ENCODE measurements at regions of chr9 and their contacts with region 1.

Region 1: GRCh38 chr9:36873247-36873875 is 160.7 kb downstream of the PAX5 start:
- DNase-seq: peak; percentile 40 to 56
- H3K4me3 ChIP-seq: no peak overlapping the region
- H3K27ac ChIP-seq: no peak overlapping the region
- H3K4me1 ChIP-seq: no peaks in the 10 kb centered on the region
- H3K27me3 ChIP-seq: peaks cover 20% of the 10 kb centered on the region
- CTCF ChIP-seq: peak; percentile 88

Region 2: DNA sequence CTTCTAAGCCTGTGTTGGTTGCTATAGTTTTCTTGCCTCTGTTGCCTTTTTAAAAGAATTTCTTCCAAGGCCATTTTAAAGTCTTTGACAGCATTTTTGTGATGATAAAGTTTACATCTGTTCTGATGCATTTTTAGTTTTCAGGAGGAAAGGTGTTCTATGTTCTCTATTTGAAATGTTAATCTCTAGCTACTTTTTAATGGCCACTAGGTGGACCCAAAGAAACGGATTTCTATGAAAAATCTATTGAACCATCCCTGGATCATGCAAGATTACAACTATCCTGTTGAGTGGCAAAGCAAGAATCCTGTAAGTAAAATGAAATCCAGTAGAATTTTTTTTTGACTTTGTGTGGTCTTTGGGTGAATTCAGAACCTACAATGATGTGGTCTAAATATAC is 240.5 kb before region 1 on chr9:
- CTCF ChIA-PET with region 1: no interaction called
- POLR2A ChIA-PET with region 1: no interaction called
- intact Hi-C with region 1: loop called (anchors 5 kb)
- DNase-seq: no peak
- H3K4me3 ChIP-seq: no peak overlapping the region
- H3K27ac ChIP-seq: no peak overlapping the region
- H3K4me1 ChIP-seq: no peaks in the 10 kb centered on the region
- H3K27me3 ChIP-seq: no peaks in the 10 kb centered on the region
- CTCF ChIP-seq: peak; percentile 70

Region 3: GRCh38 chr9:36900136-36900855 is 26.9 kb after region 1 on chr9:
- CTCF ChIA-PET with region 1: no interaction called
- POLR2A ChIA-PET with region 1: no interaction called
- intact Hi-C with region 1: no loop called
- DNase-seq: no peak
- H3K4me3 ChIP-seq: no peak overlapping the region
- H3K27ac ChIP-seq: no peak overlapping the region
- H3K4me1 ChIP-seq: no peaks in the 10 kb centered on the region
- H3K27me3 ChIP-seq: peaks cover 49% of the 10 kb centered on the region
- CTCF ChIP-seq: no peak

Region 4: GRCh38 chr9:36913393-36914211 is 40.2 kb after region 1 on chr9:
- CTCF ChIA-PET with region 1: no interaction called
- POLR2A ChIA-PET with region 1: no interaction called
- intact Hi-C with region 1: no loop called
- DNase-seq: no peak
- H3K4me3 ChIP-seq: no peak overlapping the region
- H3K27ac ChIP-seq: no peak overlapping the region
- H3K4me1 ChIP-seq: 0 out of 2 replicates have a peak, but pooled peaks cover 3% of the 10 kb centered on the region
- H3K27me3 ChIP-seq: peaks cover 17% of the 10 kb centered on the region; the same call in 1 of the 2 replicates
- CTCF ChIP-seq: no peak

Measured in PC-9 (cell line).